Endothelial cell of umbilical vein (primary cell): ENCODE measurements at regions of chr4 and their contacts with region 1.

Region 1: DNA sequence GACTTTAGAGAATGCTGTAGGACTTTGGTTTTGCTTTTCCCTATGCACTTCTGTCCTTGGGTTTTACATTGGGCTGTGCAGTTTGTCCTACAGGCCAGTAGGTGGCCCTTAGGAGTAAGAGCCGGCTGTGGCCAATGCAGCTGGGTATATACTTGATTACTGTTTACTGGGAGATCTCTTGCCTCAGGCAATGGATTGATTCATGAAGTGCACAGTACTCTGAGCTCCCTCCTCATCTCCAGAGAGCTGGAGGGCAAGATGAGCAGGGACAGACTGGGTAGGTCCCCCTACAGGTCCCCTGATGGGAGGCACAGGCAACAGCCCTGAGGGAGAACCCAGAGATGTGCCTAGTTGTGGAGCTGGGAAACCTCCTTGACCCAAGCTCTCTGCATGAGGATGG is 103.8 kb upstream of the QRFPR start:
- DNase-seq: peak; percentile 47
- H3K4me3 ChIP-seq: no peak overlapping the region
- H3K27ac ChIP-seq: no peak overlapping the region
- H3K4me1 ChIP-seq: no peaks in the 10 kb centered on the region
- H3K27me3 ChIP-seq: peaks cover 0 to 17% of the 10 kb centered on the region in 2 experiments
- CTCF ChIP-seq: peak; percentile 68 to 78
- POLR2A ChIP-seq: no peak

Region 2: GRCh38 chr4:121656269-121656641 is 171.6 kb after region 1 on chr4:
- CTCF ChIA-PET with region 1: interaction called, 24 read pairs
- POLR2A ChIA-PET with region 1: no interaction called
- dilution Hi-C with region 1: no loop called
- intact Hi-C with region 1: loop called (anchors 1 kb)
- DNase-seq: peak; percentile 66
- H3K4me3 ChIP-seq: no peak overlapping the region
- H3K27ac ChIP-seq: no peak overlapping the region
- H3K4me1 ChIP-seq: no peaks in the 10 kb centered on the region
- H3K27me3 ChIP-seq: no peaks in the 10 kb centered on the region
- CTCF ChIP-seq: peak; percentile 30 to 56
- POLR2A ChIP-seq: no peak